Panc1 (cell line): ENCODE measurements at regions of chr6 and their contacts with region 1.

Region 1: DNA sequence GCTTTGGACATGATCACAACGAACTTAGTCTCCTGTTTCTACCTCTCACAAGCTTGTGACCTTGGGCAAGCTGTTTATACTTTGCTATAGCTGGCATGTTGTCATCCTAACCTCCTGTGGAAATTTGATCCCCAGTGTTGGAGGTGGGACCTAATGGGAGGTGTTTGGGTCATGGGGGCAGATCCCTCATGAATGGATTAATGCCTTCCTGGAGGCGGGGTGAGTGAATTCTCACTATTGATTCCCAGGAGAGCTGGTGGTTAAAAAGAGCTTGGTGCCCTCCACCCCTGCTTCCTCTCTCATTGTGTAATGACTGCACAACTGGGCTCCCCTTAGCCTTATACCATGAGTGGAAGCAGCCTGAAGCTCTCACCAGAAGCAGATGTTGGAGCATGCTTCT is 228.9 kb downstream of the HIVEP2 start:
- DNase-seq: no peak
- ATAC-seq: no peak
- H3K4me3 ChIP-seq: no peak overlapping the region
- H3K27ac ChIP-seq: no peak overlapping the region
- H3K4me1 ChIP-seq: no peaks in the 10 kb centered on the region
- H3K27me3 ChIP-seq: peaks cover 14% of the 10 kb centered on the region
- CTCF ChIP-seq: no peak

Region 2: GRCh38 chr6:142518115-142518514 is 198.0 kb before region 1 on chr6:
- CTCF ChIA-PET with region 1: no interaction called
- POLR2A ChIA-PET with region 1: no interaction called
- in situ Hi-C with region 1: no loop called
- intact Hi-C with region 1: no loop called
- DNase-seq: no peak
- ATAC-seq: no peak
- H3K4me3 ChIP-seq: no peak overlapping the region
- H3K27ac ChIP-seq: no peak overlapping the region
- H3K4me1 ChIP-seq: no peaks in the 10 kb centered on the region
- H3K27me3 ChIP-seq: peaks cover 4% of the 10 kb centered on the region; the same call in 1 of the 2 replicates
- CTCF ChIP-seq: no peak

Region 3: GRCh38 chr6:142737368-142738034 is 21.4 kb after region 1 on chr6:
- CTCF ChIA-PET with region 1: no interaction called
- POLR2A ChIA-PET with region 1: no interaction called
- in situ Hi-C with region 1: no loop called
- intact Hi-C with region 1: no loop called
- DNase-seq: no peak
- ATAC-seq: no peak
- H3K4me3 ChIP-seq: no peak overlapping the region
- H3K27ac ChIP-seq: no peak overlapping the region
- H3K4me1 ChIP-seq: no peaks in the 10 kb centered on the region
- H3K27me3 ChIP-seq: no peaks in the 10 kb centered on the region; the same call in 1 of the 2 replicates
- CTCF ChIP-seq: no peak

Region 4: GRCh38 chr6:143049611-143050010 is 333.5 kb after region 1 on chr6:
- CTCF ChIA-PET with region 1: interaction called, 11 read pairs
- POLR2A ChIA-PET with region 1: no interaction called
- in situ Hi-C with region 1: no loop called
- intact Hi-C with region 1: no loop called
- DNase-seq: no peak
- ATAC-seq: no peak
- H3K4me3 ChIP-seq: no peak overlapping the region
- H3K27ac ChIP-seq: no peak overlapping the region
- H3K4me1 ChIP-seq: no peaks in the 10 kb centered on the region
- H3K27me3 ChIP-seq: peaks cover 18% of the 10 kb centered on the region
- CTCF ChIP-seq: no peak